Tibial artery (tissue), 4 donors: ENCODE measurements at regions of chr6 and their contacts with region 1.

Region 1: DNA sequence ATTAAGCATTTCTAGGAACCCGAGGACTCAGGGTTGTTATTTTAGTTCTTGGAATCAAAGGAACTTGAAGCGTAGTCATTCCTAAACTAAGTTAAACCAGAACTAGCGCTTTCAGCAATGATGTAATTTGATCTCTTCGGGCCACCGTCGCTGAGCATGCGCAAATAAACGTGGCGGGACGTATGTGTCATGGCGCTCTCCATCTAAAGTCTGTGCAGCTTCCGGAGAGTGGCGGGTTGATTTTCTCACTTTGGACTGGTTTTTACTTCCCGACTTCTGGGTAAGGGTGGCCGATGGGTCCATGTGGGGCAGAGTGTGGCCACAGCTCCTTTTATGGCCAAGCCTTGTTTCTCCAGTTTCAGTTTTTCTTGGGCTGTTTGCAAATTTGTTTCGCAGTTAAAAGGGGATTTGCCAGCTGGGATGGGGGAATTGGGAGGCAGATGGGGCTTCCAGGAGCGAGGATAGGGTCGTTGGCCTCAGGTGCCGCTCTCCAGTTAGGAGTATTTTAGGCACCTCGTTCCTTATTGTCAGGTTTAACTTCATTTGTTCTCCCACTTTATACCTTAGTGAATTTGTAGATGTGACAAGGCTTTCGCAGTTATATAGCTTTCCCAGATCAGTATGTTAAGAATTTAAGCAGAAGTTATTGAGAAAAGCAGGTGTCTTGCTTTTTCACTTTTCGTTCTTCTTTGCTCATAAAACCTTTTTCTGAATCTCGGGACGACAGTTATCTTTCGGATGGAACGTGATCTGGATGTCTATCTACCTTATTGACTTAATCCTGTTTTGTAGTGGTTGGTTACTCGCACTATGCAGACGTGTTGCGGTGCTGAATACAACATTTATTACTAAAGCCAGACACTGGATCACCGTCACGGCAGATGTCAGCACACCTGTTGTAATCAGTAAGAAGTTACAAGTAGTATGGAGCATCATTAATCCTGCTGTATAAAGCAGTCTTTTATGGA is at the start of gene CDKAL1:
- DNase-seq: peak; percentile 91 to 93
- H3K4me3 ChIP-seq: peak within 1 kb of the TSS; percentile 77 to 83
- H3K27ac ChIP-seq: peak within 1 kb of the TSS; percentile 85 to 86
- H3K4me1 ChIP-seq: peaks cover 0 to 22% (median 19%) of the 10 kb centered on the region in 4 donors
- H3K27me3 ChIP-seq: no peaks in the 10 kb centered on the region
- CTCF ChIP-seq: no peak

Region 2: DNA sequence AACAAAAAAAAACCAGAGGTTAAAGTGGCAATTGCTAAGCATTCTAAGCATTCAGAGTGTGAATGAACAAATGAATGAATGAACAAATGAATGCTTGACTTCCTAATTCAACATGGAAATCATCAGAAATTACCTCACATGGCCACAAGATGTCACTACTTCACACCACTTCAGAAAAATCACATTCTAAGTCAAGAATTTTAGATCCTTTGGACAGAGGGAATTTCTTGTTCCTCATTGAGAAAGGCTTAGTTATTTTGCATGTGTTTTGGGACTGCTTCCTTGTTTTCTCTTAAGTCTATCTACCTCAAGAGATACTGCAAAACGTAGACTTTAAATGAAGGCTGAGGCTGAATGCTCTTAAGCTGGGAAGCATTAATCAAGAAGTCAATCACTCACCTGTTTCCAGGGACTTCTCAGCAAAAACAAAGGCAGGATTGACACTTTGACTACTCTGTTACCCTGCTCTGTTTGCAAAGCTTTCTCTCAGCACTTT is 442.5 kb before region 1 on chr6:
- intact Hi-C with region 1: loop called (anchors 10 kb)
- DNase-seq: no peak
- H3K4me3 ChIP-seq: no peak overlapping the region
- H3K27ac ChIP-seq: no peak overlapping the region
- H3K4me1 ChIP-seq: no peaks in the 10 kb centered on the region
- H3K27me3 ChIP-seq: no peaks in the 10 kb centered on the region
- CTCF ChIP-seq: peak; percentile 66 to 76

Region 3: DNA sequence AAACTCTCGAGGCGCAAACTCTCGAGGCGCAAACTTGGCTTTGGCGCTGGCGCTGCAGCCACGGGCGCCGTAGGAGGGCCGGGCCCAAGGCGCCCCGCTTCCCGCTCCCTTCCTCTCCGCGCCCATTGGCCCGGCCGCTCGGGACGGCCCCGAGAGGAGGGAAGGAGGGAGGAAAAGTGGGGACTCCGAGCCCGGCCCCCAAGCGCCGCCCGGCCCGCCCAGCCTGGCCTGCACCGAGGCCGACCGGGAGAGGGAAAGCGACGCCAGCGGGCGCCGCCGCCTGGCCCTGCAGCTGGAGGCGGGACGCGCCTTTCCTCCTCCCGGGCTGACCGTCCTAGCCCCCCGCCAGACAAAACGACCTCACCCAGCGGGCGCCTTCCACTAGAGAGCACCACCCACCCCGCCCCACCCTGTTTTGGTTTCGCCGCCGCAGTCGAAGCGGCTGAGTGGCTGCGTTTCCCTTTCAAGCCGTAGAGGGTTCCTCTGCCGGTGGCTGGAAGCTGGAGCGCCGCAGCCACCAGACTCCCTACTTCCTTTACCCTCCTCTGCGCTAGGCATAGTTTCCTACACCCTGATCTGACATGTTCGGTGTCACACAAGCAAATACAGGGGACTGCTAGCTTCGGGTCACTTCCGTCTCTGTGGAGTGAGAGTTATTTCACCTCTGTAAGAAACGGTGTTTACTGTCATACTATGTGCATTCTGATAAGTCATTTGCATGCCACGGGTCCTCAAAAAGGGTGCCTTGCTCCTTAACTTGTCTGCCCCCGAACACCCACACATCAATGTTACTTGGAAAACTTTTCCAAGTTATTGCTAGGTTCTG is 322.0 kb before region 1 on chr6 and contains the start of gene MBOAT1:
- intact Hi-C with region 1: loop called (anchors 10 kb)
- DNase-seq: peak; percentile 90 to 96
- H3K4me3 ChIP-seq: peak within 1 kb of the TSS; percentile 90 to 95
- H3K27ac ChIP-seq: peak within 1 kb of the TSS; percentile 86 to 89
- H3K4me1 ChIP-seq: peaks cover 0 to 38% (median 20%) of the 10 kb centered on the region in 4 donors
- H3K27me3 ChIP-seq: no peaks in the 10 kb centered on the region
- CTCF ChIP-seq: peak; percentile 16 to 18

Region 4: GRCh38 chr6:20846602-20847028 is 312.0 kb after region 1 on chr6:
- intact Hi-C with region 1: no loop called
- DNase-seq: no peak
- H3K4me3 ChIP-seq: no peak overlapping the region
- H3K27ac ChIP-seq: no peak overlapping the region
- H3K4me1 ChIP-seq: peaks cover 0 to 8% (median 2%) of the 10 kb centered on the region in 4 donors
- H3K27me3 ChIP-seq: no peaks in the 10 kb centered on the region
- CTCF ChIP-seq: no peak